ENCODE measurements at regions of chr12 and their contacts with region 1.

Region 1: DNA sequence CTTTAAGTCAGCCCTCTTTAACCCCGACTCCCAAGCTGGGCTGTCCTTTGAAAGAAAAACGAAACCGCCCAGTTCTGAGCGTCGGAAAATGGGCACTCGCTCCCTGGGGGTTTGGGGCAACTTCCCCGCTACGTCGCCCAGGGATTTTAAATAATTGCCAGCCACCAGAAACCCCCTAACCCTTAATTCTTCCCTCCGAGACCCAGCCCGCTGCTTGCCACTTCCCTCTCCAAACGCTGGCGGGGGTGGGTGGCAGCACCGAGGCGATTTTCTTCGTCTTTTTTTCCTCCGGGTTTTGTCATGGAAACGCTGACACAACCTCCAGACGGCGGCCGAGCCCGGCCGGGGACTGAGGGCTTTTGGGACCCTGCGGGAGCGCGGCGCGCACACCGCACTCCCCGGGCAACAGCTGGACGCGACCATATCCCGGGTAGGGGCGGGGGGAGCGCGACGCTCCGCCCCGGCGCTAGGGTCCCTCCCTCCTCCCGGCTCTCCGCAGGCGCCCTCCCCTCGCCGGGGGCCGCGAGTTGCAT is at the start of gene CHST11:
- DNase-seq: peak; percentile 53 to 89 (median 69)
- ATAC-seq: peak; percentile 60
- H3K4me3 ChIP-seq: peak within 1 kb of the TSS; percentile 100
- H3K4me3 Mint-ChIP-seq: peak within 1 kb of the TSS; percentile 99
- H3K27ac ChIP-seq: peak within 1 kb of the TSS; percentile 49 to 78
- H3K27ac Mint-ChIP-seq: peak within 1 kb of the TSS; percentile 86
- H3K4me1 ChIP-seq: peaks cover 27% of the 10 kb centered on the region
- H3K4me1 Mint-ChIP-seq: peaks cover 45% of the 10 kb centered on the region
- H3K27me3 ChIP-seq: no peaks in the 10 kb centered on the region
- H3K27me3 Mint-ChIP-seq: no peaks in the 10 kb centered on the region
- CTCF ChIP-seq: no peak
- total RNA-seq, gene CHST11: 53.4 to 53.6 TPM

Region 2: GRCh38 chr12:104286538-104287482 is 169.7 kb before region 1 on chr12:
- CTCF ChIA-PET with region 1: no interaction called
- POLR2A ChIA-PET with region 1: interaction called, 3 read pairs
- intact Hi-C with region 1: loop called in 1 of 2 experiments (anchors 5 kb)
- DNase-seq: peak; percentile 70 to 96 (median 86)
- ATAC-seq: peak; percentile 84
- H3K4me3 ChIP-seq: peak overlapping the region; percentile 90
- H3K4me3 Mint-ChIP-seq: peak overlapping the region; percentile 98
- H3K27ac ChIP-seq: peak overlapping the region; percentile 67 to 84
- H3K27ac Mint-ChIP-seq: peak overlapping the region; percentile 96
- H3K4me1 ChIP-seq: peaks cover 35% of the 10 kb centered on the region
- H3K4me1 Mint-ChIP-seq: peaks cover 35% of the 10 kb centered on the region
- H3K27me3 ChIP-seq: peaks cover 0 to 7% of the 10 kb centered on the region in 2 experiments
- H3K27me3 Mint-ChIP-seq: no peaks in the 10 kb centered on the region
- CTCF ChIP-seq: no peak

Region 3: DNA sequence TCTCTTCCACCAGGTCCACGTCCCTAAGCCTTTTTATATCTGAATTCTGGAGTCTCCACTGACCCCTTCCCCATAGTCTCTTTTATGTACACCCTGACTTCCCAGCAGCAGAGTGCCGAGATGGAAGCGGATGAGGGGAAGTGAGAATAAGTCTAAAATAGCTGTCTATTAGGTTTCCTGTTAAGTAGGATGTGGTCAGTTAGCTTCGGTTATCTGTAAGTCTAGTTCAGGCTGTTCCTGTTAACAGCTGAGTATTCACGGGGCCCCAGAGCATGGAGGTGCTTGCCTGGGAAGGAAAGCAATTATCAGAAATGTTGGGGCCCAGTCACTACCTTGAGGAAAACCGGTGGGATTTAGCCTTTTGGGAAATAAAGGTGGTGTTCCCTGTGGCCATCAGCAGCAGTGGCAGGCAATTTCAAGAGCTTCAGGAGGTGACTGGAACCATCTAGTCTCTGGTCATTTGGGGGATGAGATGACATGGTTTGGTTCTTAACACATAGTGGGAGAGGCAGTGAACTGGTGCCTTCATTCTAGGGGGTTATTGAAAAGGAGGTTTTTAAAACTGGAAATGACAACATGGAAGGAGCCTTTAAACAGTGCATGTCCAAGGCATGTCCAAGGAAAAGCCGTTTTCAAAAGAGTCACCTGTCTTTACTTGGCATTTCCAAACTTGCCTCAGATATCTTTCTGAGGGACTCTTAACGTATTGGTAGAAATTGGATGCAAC is 22.1 kb after region 1 on chr12:
- CTCF ChIA-PET with region 1: interaction called, 14 read pairs
- POLR2A ChIA-PET with region 1: interaction called, 56 read pairs
- intact Hi-C with region 1: no loop called
- DNase-seq: peak in 7 of 14 experiments; percentile 16 to 88 (median 50)
- ATAC-seq: peak; percentile 81
- H3K4me3 ChIP-seq: peak overlapping the region; percentile 37
- H3K4me3 Mint-ChIP-seq: peak overlapping the region; percentile 89
- H3K27ac ChIP-seq: peak overlapping the region; percentile 8 to 33
- H3K27ac Mint-ChIP-seq: peak overlapping the region; percentile 87
- H3K4me1 ChIP-seq: peaks cover 71% of the 10 kb centered on the region
- H3K4me1 Mint-ChIP-seq: peaks cover 88% of the 10 kb centered on the region
- H3K27me3 ChIP-seq: no peaks in the 10 kb centered on the region
- H3K27me3 Mint-ChIP-seq: no peaks in the 10 kb centered on the region
- CTCF ChIP-seq: no peak

Region 4: GRCh38 chr12:104501660-104502059 is 45.2 kb after region 1 on chr12:
- CTCF ChIA-PET with region 1: interaction called, 4 read pairs
- POLR2A ChIA-PET with region 1: interaction called, 21 read pairs
- intact Hi-C with region 1: loop called (anchors 1 to 2 kb)
- DNase-seq: no peak
- ATAC-seq: no peak
- H3K4me3 ChIP-seq: no peak overlapping the region
- H3K4me3 Mint-ChIP-seq: peak overlapping the region; percentile 5
- H3K27ac ChIP-seq: no peak overlapping the region
- H3K27ac Mint-ChIP-seq: no peak overlapping the region
- H3K4me1 ChIP-seq: peaks cover 75% of the 10 kb centered on the region
- H3K4me1 Mint-ChIP-seq: peaks cover 97% of the 10 kb centered on the region
- H3K27me3 ChIP-seq: no peaks in the 10 kb centered on the region
- H3K27me3 Mint-ChIP-seq: no peaks in the 10 kb centered on the region
- CTCF ChIP-seq: no peak

Region 5: DNA sequence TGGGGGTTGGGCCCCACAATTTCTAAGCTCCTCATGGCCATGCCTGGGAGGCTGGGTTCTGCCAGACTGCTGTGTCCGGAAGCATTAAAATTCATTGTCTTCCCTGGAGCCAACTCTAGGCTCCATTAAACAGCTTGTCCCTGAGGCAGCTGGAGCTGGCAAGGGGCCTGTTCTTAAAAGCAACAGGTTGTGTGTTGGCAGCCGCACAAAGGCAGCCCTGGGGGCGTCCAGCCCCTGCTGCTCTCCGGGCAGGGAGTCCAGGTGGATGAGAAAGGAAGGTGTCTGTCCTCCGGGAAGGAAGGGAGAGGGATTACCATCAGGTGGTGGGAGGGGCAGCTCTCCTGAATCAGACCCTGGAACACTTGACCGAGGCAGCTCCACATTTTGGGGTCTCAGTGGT is 99.2 kb after region 1 on chr12:
- CTCF ChIA-PET with region 1: no interaction called
- POLR2A ChIA-PET with region 1: no interaction called
- intact Hi-C with region 1: no loop called
- DNase-seq: no peak
- ATAC-seq: no peak
- H3K4me3 ChIP-seq: no peak overlapping the region
- H3K4me3 Mint-ChIP-seq: no peak overlapping the region
- H3K27ac ChIP-seq: no peak overlapping the region
- H3K27ac Mint-ChIP-seq: peak overlapping the region; percentile 61
- H3K4me1 ChIP-seq: peaks cover 20% of the 10 kb centered on the region
- H3K4me1 Mint-ChIP-seq: peaks cover 60% of the 10 kb centered on the region
- H3K27me3 ChIP-seq: no peaks in the 10 kb centered on the region
- H3K27me3 Mint-ChIP-seq: no peaks in the 10 kb centered on the region
- CTCF ChIP-seq: no peak

Region 6: DNA sequence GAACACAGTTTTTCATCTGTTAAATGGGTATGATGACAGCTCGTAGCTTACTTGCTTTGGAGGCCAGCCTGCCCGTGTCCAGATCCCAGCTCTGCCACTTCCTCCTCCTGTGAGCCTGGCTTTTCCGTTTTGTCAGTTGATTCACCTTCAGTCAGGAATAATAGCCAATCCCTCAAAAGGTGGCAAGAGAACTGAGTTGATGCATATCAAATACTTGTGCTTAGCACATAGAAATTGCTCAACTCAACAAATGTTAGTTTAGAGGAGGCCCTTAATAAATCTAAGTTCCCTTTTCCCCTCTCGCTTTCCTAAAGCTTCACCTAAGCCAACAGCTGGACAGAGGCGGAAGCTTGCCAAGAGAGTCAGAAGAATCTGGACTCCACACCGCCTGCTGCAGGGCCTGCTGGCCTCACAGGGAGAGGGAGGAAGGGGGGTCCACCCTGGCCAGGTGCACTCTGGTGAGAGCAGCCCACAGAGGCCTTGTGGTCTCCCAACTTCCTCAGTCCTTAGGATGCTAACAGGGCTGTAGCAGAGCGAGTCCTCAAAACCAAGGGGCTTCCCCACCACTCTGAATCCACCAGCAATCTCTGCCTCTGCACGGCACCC is 213.4 kb after region 1 on chr12:
- CTCF ChIA-PET with region 1: no interaction called
- POLR2A ChIA-PET with region 1: interaction called, 3 read pairs
- intact Hi-C with region 1: loop called in 1 of 2 experiments (anchors 5 kb)
- DNase-seq: peak in 5 of 14 experiments; percentile 11 to 63 (median 32)
- ATAC-seq: peak; percentile 51
- H3K4me3 ChIP-seq: no peak overlapping the region
- H3K4me3 Mint-ChIP-seq: no peak overlapping the region
- H3K27ac ChIP-seq: no peak overlapping the region
- H3K27ac Mint-ChIP-seq: peak overlapping the region; percentile 84
- H3K4me1 ChIP-seq: peaks cover 47% of the 10 kb centered on the region
- H3K4me1 Mint-ChIP-seq: peaks cover 55% of the 10 kb centered on the region
- H3K27me3 ChIP-seq: no peaks in the 10 kb centered on the region
- H3K27me3 Mint-ChIP-seq: no peaks in the 10 kb centered on the region
- CTCF ChIP-seq: no peak

Region 7: DNA sequence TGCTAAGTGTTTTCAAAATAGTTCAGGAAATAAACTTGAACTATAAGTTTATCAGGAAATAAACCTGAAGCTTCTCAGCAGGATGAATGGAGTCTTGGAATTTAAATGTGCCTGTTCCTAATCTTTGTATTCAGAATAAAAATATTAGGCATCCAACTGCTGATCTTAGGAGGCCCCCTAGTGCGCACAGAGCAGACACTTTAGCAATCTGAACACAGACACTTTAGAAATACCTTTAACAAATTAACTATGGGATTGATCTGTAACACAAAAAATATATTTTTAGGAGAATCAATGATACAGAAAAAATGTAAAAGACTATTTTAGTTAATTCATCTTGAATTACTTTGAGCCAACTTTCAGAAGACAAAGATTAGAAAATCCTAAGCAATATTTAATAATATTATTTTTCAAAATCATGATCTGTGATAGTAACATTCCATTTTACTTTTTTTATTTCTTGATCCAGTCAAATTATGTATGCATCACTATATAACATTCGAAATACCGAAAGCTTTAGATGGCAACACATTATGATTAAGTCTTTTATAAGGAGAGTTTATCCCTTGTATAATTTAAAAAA is 420.7 kb after region 1 on chr12:
- CTCF ChIA-PET with region 1: no interaction called
- POLR2A ChIA-PET with region 1: no interaction called
- intact Hi-C with region 1: loop called in 1 of 2 experiments (anchors 5 kb)
- DNase-seq: peak; percentile 14 to 61 (median 27)
- ATAC-seq: peak; percentile 56
- H3K4me3 ChIP-seq: no peak overlapping the region
- H3K4me3 Mint-ChIP-seq: no peak overlapping the region
- H3K27ac ChIP-seq: no peak overlapping the region
- H3K27ac Mint-ChIP-seq: no peak overlapping the region
- H3K4me1 ChIP-seq: no peaks in the 10 kb centered on the region
- H3K4me1 Mint-ChIP-seq: no peaks in the 10 kb centered on the region
- H3K27me3 ChIP-seq: no peaks in the 10 kb centered on the region
- H3K27me3 Mint-ChIP-seq: no peaks in the 10 kb centered on the region
- CTCF ChIP-seq: peak; percentile 86